Transverse colon (tissue), 4 donors: ENCODE measurements at regions of chr7 and their contacts with region 1.

Region 1: DNA sequence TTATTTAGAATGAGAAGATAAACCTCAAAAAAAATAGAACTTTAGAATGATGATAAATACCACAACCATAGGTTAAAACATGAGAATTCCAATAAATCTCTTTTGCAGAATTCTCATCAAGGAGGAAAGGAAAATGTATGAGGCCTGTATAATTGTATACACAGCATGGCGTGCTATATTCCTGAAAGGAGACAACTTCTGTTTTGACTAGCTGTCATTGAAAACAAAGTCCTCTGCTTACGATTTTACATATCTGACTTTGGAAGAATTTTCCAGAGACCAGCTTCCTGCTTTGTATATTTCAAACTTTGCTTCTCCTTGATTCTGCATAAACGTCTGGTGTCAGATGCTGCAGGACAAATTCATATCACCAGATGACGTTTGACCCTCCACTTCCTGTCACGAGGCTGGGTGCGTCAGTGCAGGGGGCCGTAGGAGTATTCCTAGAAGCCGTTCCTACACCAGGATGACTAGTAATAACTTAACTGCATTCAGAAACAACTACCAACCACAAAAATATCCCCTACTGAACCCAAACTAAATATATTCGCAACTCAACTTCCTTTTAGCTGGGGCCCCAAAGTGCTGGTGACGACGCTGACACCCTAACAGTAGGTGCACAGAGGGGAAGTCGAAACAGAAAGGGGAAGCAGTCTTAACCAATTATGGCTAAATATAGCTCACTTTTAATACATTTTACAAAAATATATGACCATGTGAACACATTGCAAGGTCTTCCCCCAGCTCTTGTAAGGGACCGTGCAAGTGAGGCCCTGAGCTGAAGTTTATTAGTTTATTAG is 178.6 kb upstream of the INHBA start:
- DNase-seq: peak; percentile 46
- H3K4me3 ChIP-seq: no peak overlapping the region
- H3K27ac ChIP-seq: peak overlapping the region in 2 of 4 donors; percentile 11 to 35
- H3K4me1 ChIP-seq: peaks cover 6 to 15% (median 13%) of the 10 kb centered on the region in 4 donors
- H3K27me3 ChIP-seq: no peaks in the 10 kb centered on the region
- CTCF ChIP-seq: no peak
- EP300 ChIP-seq: no peak
- POLR2A ChIP-seq: no peak

Region 2: GRCh38 chr7:42964849-42965805 is 1083.6 kb after region 1 on chr7:
- in situ Hi-C with region 1: no loop called
- intact Hi-C with region 1: loop called (anchors 5 kb)
- DNase-seq: no peak
- H3K4me3 ChIP-seq: no peak overlapping the region
- H3K27ac ChIP-seq: peak overlapping the region in 2 of 4 donors; percentile 21 to 54
- H3K4me1 ChIP-seq: no peaks in the 10 kb centered on the region
- H3K27me3 ChIP-seq: no peaks in the 10 kb centered on the region
- CTCF ChIP-seq: no peak
- EP300 ChIP-seq: peak; percentile 54
- POLR2A ChIP-seq: no peak